Naive thymus-derived CD4-positive, alpha-beta T cell (primary cell): ENCODE measurements at regions of chr5 and their contacts with region 1.

Region 1: DNA sequence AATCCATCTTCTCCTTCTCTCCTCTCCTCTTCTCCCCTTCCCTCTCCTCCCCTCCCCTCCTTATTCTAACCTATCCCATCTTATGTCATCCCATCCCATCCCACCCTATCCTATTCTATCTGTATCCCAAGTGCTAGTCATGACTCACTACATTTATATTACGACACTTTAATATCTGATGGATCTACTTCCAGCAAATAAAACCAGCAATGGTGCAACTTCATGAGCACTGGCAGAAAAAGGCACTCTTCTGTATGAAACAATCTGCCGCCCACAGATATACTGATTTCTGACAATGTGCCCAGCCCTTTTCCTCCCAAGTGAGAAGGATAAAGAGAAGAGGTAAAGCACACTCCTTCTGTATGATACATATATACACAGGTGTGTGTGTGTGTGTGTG is 86.6 kb upstream of the ANKH start:
- DNase-seq: no peak
- ATAC-seq: no peak
- H3K4me3 ChIP-seq: no peak overlapping the region
- H3K4me3 Mint-ChIP-seq: no peak overlapping the region
- H3K27ac ChIP-seq: no peak overlapping the region
- H3K27ac Mint-ChIP-seq: no peak overlapping the region
- H3K4me1 ChIP-seq: no peaks in the 10 kb centered on the region
- H3K4me1 Mint-ChIP-seq: peaks cover 0 to 5% (median 0%) of the 10 kb centered on the region in 7 donors
- H3K27me3 ChIP-seq: no peaks in the 10 kb centered on the region
- H3K27me3 Mint-ChIP-seq: peaks cover 0 to 10% (median 0%) of the 10 kb centered on the region in 5 donors

Region 2: GRCh38 chr5:14946815-14947640 is 11.2 kb before region 1 on chr5:
- CTCF ChIA-PET with region 1: interaction called, 10 read pairs
- POLR2A ChIA-PET with region 1: interaction called, 4 read pairs
- intact Hi-C with region 1: no loop called
- DNase-seq: peak in 7 of 9 donors; percentile 34 to 66 (median 56)
- ATAC-seq: peak; percentile 92
- H3K4me3 ChIP-seq: no peak overlapping the region
- H3K4me3 Mint-ChIP-seq: no peak overlapping the region
- H3K27ac ChIP-seq: no peak overlapping the region
- H3K27ac Mint-ChIP-seq: no peak overlapping the region
- H3K4me1 ChIP-seq: no peaks in the 10 kb centered on the region
- H3K4me1 Mint-ChIP-seq: peaks cover 0 to 9% (median 5%) of the 10 kb centered on the region in 7 donors
- H3K27me3 ChIP-seq: no peaks in the 10 kb centered on the region
- H3K27me3 Mint-ChIP-seq: peaks cover 0 to 5% (median 4%) of the 10 kb centered on the region in 5 donors

Region 3: DNA sequence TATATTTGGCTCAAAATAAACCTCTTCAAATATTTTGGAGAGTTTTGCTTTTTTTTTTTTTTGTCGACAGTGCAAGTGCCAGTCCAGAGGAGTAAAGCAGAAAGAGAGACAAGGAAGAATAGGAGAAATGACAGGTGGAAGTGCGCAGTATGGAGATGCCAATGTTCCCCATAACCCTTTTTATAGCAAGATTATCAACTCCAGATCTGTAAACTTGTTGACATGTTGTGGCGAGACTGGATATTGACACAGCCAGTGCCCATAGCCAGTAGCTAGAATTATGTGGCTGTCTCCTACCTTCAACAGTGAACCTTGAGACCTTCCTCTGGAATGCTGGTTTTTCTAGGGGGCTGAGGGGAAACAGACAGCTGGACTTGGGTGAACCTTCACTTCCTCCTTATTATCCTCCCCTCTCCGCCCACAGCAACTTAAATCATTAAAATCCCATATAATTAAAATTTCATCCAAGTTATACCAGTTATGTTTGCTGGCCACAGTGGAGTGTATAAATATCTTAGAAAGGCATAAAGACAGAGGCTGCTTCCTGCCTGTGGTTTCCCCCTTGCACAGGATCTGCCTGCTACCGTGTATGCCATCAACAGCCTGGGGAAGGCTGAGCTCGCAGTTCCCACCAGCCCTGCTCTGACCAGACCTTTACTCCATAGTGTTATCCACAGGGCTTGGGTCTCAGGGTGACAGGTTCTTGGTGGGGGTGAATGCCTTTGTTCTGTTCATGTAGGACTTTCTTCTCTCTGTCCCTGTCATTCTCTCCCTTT is 25.7 kb after region 1 on chr5:
- CTCF ChIA-PET with region 1: interaction called, 4 read pairs
- POLR2A ChIA-PET with region 1: no interaction called
- intact Hi-C with region 1: loop called in 1 of 2 experiments (anchors 2 kb)
- DNase-seq: peak in 7 of 9 donors; percentile 9 to 38 (median 25)
- ATAC-seq: peak; percentile 90
- H3K4me3 ChIP-seq: no peak overlapping the region
- H3K4me3 Mint-ChIP-seq: peak overlapping the region in 8 of 10 donors; percentile 11 to 63 (median 53)
- H3K27ac ChIP-seq: no peak overlapping the region
- H3K27ac Mint-ChIP-seq: peak overlapping the region in 3 of 9 donors; percentile 16 to 51 (median 41)
- H3K4me1 ChIP-seq: peaks cover 0 to 21% of the 10 kb centered on the region in 2 donors
- H3K4me1 Mint-ChIP-seq: peaks cover 15 to 27% (median 24%) of the 10 kb centered on the region in 7 donors
- H3K27me3 ChIP-seq: no peaks in the 10 kb centered on the region
- H3K27me3 Mint-ChIP-seq: peaks cover 0 to 4% (median 0%) of the 10 kb centered on the region in 5 donors

Region 4: GRCh38 chr5:15003511-15003920 is 45.3 kb after region 1 on chr5:
- CTCF ChIA-PET with region 1: interaction called, 35 read pairs
- POLR2A ChIA-PET with region 1: interaction called, 6 read pairs
- intact Hi-C with region 1: loop called (anchors 1 kb)
- DNase-seq: peak; percentile 10 to 77 (median 69)
- ATAC-seq: peak; percentile 96
- H3K4me3 ChIP-seq: no peak overlapping the region
- H3K4me3 Mint-ChIP-seq: no peak overlapping the region
- H3K27ac ChIP-seq: no peak overlapping the region
- H3K27ac Mint-ChIP-seq: peak overlapping the region in 1 of 9 donors; percentile 33
- H3K4me1 ChIP-seq: no peaks in the 10 kb centered on the region
- H3K4me1 Mint-ChIP-seq: peaks cover 0 to 20% (median 0%) of the 10 kb centered on the region in 7 donors
- H3K27me3 ChIP-seq: peaks cover 0 to 3% of the 10 kb centered on the region in 2 donors
- H3K27me3 Mint-ChIP-seq: peaks cover 0 to 38% (median 0%) of the 10 kb centered on the region in 5 donors

Region 5: DNA sequence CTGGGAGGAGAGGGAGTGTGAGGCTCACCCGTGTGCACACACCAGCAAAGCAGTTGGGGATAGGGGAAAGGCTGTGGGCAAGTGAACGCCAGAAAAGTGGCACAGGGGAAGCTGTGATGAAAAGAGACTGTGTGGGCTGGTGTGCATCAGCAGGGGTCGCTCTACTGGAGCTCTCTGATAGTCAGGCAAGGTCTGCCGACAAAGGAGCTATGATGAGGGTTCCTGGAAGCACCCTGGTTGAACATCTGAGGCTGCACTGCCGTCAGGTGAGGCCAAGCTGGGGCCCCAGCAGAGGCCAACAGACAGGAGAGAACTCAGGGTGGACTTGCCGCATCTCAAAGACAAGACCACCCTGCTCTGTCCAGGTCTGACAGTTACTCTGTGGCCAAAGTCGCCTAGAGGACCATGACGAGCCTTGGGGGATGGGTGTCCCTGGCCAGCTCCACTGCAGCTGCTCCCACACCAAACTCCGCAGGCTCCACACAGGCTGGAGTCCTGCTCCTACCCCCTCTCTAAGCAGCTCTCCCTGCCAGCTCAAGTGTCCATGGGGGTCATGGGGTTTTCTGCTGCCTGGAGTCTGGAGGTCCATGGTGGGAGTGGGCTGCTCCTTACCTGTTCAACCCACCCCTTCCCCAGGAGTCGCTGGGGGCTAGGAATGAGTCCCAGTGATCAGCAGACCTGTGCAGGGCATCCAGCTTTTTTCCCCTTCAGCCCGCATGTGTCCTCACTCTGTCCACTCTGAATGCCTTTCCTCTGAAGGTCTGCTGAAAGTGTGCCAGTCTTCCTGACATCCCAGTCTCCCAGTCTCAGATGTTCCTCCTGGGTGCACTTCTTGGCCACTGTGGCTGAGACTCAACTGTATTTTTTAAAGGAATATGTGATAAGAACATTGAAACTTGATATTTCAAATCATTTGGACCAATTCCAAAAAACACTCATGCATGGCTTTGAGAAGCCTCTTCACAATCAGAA is 174.5 kb after region 1 on chr5:
- CTCF ChIA-PET with region 1: no interaction called
- POLR2A ChIA-PET with region 1: no interaction called
- intact Hi-C with region 1: no loop called
- DNase-seq: no peak
- ATAC-seq: no peak
- H3K4me3 ChIP-seq: no peak overlapping the region
- H3K4me3 Mint-ChIP-seq: no peak overlapping the region
- H3K27ac ChIP-seq: no peak overlapping the region
- H3K27ac Mint-ChIP-seq: peak overlapping the region in 1 of 9 donors; percentile 46
- H3K4me1 ChIP-seq: no peaks in the 10 kb centered on the region
- H3K4me1 Mint-ChIP-seq: no peaks in the 10 kb centered on the region
- H3K27me3 ChIP-seq: no peaks in the 10 kb centered on the region
- H3K27me3 Mint-ChIP-seq: peaks cover 0 to 9% (median 3%) of the 10 kb centered on the region in 5 donors